AG04449 (cell line): ENCODE measurements at regions of chr7 and their contacts with region 1.

Region 1: DNA sequence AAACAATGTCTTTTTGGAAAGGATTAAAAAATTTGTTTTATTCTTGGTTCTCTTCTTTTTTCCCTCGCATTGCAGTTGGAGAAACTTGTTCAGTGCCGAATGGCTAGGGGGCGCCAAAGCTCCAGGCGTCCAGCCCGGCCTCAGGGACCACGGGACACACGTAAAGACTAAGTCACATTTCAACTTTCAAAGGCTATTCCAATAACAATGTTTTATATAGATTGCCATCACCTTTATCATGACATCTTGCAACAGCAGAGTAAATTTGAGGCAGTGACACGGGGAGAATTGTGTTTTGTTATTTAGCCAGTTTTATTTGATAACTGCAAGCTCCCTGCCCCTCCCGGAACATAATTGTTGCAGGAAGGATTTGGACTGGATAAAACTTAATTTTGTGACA is 2.2 kb upstream of the IGFBP3 start:
- DNase-seq: no peak
- H3K4me3 ChIP-seq: no peak overlapping the region
- CTCF ChIP-seq: peak; percentile 87

Region 2: GRCh38 chr7:45494885-45495284 is 428.4 kb before region 1 on chr7:
- CTCF ChIA-PET with region 1: no interaction called
- POLR2A ChIA-PET with region 1: no interaction called
- DNase-seq: no peak
- H3K4me3 ChIP-seq: no peak overlapping the region
- CTCF ChIP-seq: no peak

Region 3: DNA sequence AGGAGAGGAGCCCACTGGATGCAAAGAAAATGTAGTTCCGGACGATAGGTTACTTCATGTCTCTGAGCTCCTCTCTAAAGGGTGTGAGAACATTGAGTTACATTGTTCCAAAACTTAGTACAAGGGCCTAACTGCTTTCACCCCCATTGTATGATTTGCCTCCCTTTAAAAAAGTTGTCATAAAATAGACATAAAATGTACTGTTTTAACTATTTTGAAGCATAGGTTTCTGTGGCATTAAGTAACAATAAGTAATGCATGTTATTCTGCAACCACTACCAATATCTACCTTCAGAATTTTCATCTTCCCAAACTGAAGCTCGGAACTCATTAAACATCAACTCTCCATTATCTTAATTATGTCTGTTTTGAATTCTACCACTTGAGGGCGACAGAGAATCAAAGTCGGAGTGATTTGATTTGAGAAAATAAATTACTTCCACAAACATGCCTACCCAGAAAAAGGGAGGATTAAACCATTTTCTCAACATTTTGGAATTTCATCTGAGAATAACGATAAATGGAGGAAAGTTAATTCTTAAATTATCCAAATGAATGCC is 32.3 kb before region 1 on chr7:
- CTCF ChIA-PET with region 1: interaction called, 54 read pairs
- POLR2A ChIA-PET with region 1: interaction called, 7 read pairs
- DNase-seq: no peak
- H3K4me3 ChIP-seq: no peak overlapping the region
- CTCF ChIP-seq: peak; percentile 30

Region 4: GRCh38 chr7:45969940-45970339 is 46.6 kb after region 1 on chr7:
- CTCF ChIA-PET with region 1: interaction called, 12 read pairs
- POLR2A ChIA-PET with region 1: no interaction called
- DNase-seq: no peak
- H3K4me3 ChIP-seq: no peak overlapping the region
- CTCF ChIP-seq: no peak

Region 5: DNA sequence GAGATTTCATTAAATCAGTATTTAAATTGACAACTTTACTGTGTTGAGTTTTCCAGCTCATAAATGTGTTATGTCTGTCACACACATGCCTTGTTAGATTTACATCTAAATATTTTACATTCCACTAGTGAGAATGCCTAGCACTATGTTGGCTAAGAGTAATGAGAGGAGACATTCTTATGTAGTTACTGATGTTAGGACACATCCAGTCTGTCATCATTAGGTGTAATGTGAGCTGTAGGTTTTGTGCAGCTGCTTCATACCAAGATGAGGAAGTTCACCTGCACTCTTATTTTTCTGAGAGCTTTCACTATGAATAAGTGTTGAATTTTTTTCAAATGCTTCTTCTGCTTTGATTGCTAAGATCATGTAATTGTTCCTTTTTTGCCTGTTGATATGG is 215.8 kb after region 1 on chr7:
- CTCF ChIA-PET with region 1: interaction called, 37 read pairs
- POLR2A ChIA-PET with region 1: interaction called, 7 read pairs
- DNase-seq: peak; percentile 83
- H3K4me3 ChIP-seq: no peak overlapping the region
- CTCF ChIP-seq: no peak

Region 6: DNA sequence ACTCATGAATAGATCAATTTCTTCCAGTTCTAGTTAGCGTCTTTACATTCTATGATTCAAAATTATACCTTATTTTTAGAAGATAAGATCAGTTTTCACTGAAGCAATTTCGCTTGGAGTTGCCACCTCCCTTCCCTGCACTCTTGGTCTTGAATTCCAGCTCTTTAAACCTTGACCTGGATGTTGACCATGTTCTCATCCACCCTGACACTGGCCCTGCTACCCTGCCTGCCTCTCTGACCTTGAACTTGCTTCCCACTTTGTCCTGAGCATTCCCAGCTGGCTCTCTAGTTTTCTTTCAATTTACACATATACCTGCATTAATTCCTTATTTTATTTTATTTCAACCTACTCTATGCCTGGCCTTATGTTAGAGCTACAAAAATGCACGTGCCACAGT is 272.6 kb after region 1 on chr7:
- CTCF ChIA-PET with region 1: interaction called, 13 read pairs
- POLR2A ChIA-PET with region 1: no interaction called
- DNase-seq: no peak
- H3K4me3 ChIP-seq: no peak overlapping the region
- CTCF ChIP-seq: no peak

Region 7: GRCh38 chr7:46288861-46289260 is 365.6 kb after region 1 on chr7:
- CTCF ChIA-PET with region 1: interaction called, 11 read pairs
- POLR2A ChIA-PET with region 1: no interaction called
- DNase-seq: no peak
- H3K4me3 ChIP-seq: no peak overlapping the region
- CTCF ChIP-seq: no peak

Region 8: GRCh38 chr7:46363688-46364303 is 440.5 kb after region 1 on chr7:
- CTCF ChIA-PET with region 1: interaction called, 57 read pairs
- POLR2A ChIA-PET with region 1: no interaction called
- DNase-seq: no peak
- H3K4me3 ChIP-seq: no peak overlapping the region
- CTCF ChIP-seq: no peak